RWPE1 (cell line): ENCODE measurements at regions of chr6 and their contacts with region 1.

Region 1: GRCh38 chr6:33744001-33744848 is 2.5 kb downstream of the IP6K3 start:
- DNase-seq: peak; percentile 95
- H3K27ac ChIP-seq: peak overlapping the region; percentile 93
- CTCF ChIP-seq: peak; percentile 92

Region 2: GRCh38 chr6:33481189-33481588 is 263.0 kb before region 1 on chr6:
- CTCF ChIA-PET with region 1: no interaction called
- POLR2A ChIA-PET with region 1: no interaction called
- DNase-seq: no peak
- H3K27ac ChIP-seq: no peak overlapping the region
- CTCF ChIP-seq: no peak

Region 3: GRCh38 chr6:33711140-33712129 is 32.8 kb before region 1 on chr6 and contains the start of gene UQCC2:
- CTCF ChIA-PET with region 1: interaction called, 27 read pairs
- POLR2A ChIA-PET with region 1: no interaction called
- DNase-seq: peak; percentile 98
- H3K27ac ChIP-seq: peak within 1 kb of the TSS; percentile 91
- CTCF ChIP-seq: peak; percentile 87

Region 4: DNA sequence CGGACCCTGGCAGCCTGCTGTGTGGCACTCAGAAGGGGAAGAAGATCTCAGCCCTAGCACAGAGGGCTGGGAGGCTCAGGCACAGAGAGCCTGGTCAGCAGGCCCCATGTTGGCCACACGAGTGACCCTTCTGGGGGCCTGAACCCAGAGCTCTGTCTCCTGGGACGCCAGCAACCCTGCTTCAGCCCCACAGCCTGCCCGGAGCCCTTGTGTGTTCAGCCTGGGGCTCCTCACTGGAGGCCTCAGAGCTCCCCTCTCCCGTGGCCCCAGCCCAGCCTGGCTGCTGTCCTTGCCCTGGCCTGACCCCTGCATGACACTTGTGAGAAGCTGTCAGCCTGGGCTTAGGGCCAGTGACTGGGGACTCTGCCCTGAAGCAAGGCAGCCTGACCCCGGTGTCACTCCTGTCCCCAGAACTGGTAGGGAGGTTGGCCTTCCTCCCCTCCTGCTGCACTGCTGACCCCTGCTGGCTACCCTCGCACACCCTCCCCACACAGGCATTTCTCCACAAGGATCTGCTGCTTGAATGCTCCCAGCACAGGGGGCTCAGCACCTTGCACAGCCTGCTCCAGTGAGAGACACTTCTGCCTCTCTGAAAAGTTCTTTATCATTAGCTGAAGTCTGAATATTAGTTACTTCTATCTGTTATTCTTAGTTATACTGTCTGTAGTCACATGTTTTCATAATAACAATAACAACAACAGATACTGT is 17.9 kb after region 1 on chr6:
- CTCF ChIA-PET with region 1: interaction called, 46 read pairs
- POLR2A ChIA-PET with region 1: no interaction called
- DNase-seq: peak; percentile 44
- H3K27ac ChIP-seq: peak overlapping the region; percentile 59
- CTCF ChIP-seq: peak; percentile 73

Region 5: GRCh38 chr6:33771146-33772081 is 27.2 kb after region 1 on chr6:
- CTCF ChIA-PET with region 1: interaction called, 18 read pairs
- POLR2A ChIA-PET with region 1: no interaction called
- DNase-seq: peak; percentile 69
- H3K27ac ChIP-seq: peak overlapping the region; percentile 94
- CTCF ChIP-seq: peak; percentile 94